ENCODE measurements at regions of chr6 and their contacts with region 1.

Region 1: GRCh38 chr6:25601800-25602673 is 50.0 kb upstream of the SCGN start:
- DNase-seq: no peak
- ATAC-seq: no peak
- H3K4me3 ChIP-seq: no peak overlapping the region
- H3K27ac ChIP-seq: no peak overlapping the region
- H3K4me1 ChIP-seq: no peaks in the 10 kb centered on the region
- H3K27me3 ChIP-seq: no peaks in the 10 kb centered on the region
- CTCF ChIP-seq: peak; percentile 34 to 58 (median 37)
- POLR2A ChIP-seq: no peak

Region 2: DNA sequence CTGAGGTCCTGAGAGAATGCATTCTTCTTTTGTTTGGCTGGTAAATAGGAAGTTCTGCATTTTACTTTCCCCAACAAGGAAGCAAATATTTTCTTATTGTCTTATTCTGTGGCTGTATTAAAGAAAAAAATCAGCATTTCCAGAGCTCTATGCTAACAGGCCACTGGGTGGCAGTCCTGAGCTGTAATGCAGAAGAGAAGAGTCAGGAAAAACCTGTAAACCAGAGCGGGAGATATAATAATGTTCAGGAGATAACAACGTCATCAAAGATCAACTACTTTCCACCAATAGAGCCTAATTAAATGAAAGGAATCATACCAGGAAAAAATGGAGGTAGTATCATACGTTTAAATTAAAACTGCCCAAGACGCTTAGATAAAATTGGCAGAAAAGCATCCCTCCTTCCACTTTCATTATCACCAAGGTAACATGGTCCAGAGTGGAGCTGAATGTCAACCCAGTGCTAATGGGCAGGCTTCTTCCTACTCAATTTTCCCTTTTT is 378.5 kb before region 1 on chr6:
- in situ Hi-C with region 1: loop called in 2 of 4 experiments (anchors 5 kb)
- intact Hi-C with region 1: loop called (anchors 10 kb)
- DNase-seq: peak in 1 of 2 donors; percentile 21
- ATAC-seq: peak in 1 of 2 donors; percentile 58
- H3K4me3 ChIP-seq: peak overlapping the region in 3 of 4 donors; percentile 6 to 34 (median 32)
- H3K27ac ChIP-seq: no peak overlapping the region
- H3K4me1 ChIP-seq: no peaks in the 10 kb centered on the region
- H3K27me3 ChIP-seq: no peaks in the 10 kb centered on the region
- CTCF ChIP-seq: peak; percentile 47 to 78 (median 56)
- POLR2A ChIP-seq: no peak

Region 3: DNA sequence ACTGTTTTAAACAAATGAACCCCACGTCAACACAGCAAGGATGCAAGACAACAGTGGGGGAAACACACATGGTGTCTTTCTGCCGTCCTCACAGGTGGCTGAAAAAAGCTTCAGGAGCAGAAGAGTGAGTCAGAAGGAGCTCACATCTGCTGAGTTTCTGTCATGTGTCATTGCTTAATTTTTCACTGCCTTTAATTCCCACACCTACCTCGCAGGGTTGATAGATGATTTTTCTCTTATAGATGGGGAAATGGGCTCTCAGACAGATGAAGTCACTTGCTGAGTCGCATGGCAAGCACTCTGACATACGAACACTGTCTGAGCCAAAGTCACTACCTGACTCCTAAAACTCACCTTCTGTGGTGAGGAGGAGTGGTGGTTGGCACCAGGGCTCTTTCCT is 351.2 kb before region 1 on chr6:
- in situ Hi-C with region 1: loop called in 1 of 4 experiments (anchors 25 kb)
- intact Hi-C with region 1: no loop called
- DNase-seq: no peak
- ATAC-seq: no peak
- H3K4me3 ChIP-seq: no peak overlapping the region
- H3K27ac ChIP-seq: no peak overlapping the region
- H3K4me1 ChIP-seq: no peaks in the 10 kb centered on the region
- H3K27me3 ChIP-seq: no peaks in the 10 kb centered on the region
- CTCF ChIP-seq: no peak
- POLR2A ChIP-seq: no peak

Region 4: GRCh38 chr6:25266456-25267100 is 335.5 kb before region 1 on chr6:
- in situ Hi-C with region 1: loop called in 3 of 4 experiments (anchors 5 to 25 kb)
- intact Hi-C with region 1: loop called (anchors 5 kb)
- DNase-seq: no peak
- ATAC-seq: no peak
- H3K4me3 ChIP-seq: no peak overlapping the region
- H3K27ac ChIP-seq: peak overlapping the region in 1 of 4 donors; percentile 16
- H3K4me1 ChIP-seq: no peaks in the 10 kb centered on the region
- H3K27me3 ChIP-seq: no peaks in the 10 kb centered on the region
- CTCF ChIP-seq: no peak
- POLR2A ChIP-seq: no peak

Region 5: DNA sequence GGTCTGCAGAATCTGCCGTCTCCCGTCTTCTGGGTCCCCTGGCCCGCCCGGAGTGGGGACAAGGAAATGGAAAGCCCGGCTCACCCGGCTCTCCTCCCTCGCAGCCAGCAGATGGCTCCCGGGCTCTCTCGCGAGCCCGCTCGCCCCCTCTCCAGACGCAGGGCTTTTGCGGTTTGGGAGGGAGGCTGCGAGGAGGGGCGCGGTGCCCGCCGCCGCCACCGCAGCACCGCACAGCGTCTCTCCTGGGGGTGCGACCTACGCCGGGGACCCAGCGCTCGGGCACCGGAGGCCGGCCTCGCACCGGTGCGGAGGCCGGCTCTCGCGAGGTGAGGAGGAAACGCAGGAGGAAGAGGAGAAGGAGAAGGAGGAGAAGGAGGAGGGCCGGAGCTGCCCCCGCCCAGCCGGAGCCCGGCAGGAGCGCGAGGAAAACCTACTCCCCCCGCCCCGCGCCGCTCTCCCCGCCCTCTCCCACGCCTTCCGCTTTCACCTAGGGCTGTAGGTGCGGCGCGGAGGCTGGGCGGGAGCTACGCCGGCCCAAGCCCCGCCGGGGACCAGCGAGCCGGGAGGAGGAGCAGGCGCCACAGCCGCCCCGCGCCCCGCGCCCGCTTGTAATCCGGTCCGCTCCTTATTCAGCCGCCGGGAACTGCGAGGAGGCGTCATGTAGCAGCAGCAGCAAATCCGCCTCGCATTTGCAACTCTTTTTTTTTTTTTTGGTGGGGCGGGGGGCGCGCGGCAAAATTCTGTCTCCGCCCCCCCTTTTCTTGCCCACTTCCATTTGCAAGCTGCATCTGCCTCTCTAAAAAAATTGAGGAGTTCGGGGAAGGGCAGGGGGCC is 322.9 kb before region 1 on chr6 and contains the start of gene CARMIL1:
- in situ Hi-C with region 1: loop called in 2 of 4 experiments (anchors 10 to 25 kb)
- intact Hi-C with region 1: no loop called
- DNase-seq: peak; percentile 36 to 44
- ATAC-seq: peak; percentile 67 to 84
- H3K4me3 ChIP-seq: peak within 1 kb of the TSS; percentile 63 to 89 (median 68)
- H3K27ac ChIP-seq: peak within 1 kb of the TSS in 3 of 4 donors; percentile 13 to 52 (median 16)
- H3K4me1 ChIP-seq: peaks cover 9 to 16% of the 10 kb centered on the region in 2 donors
- H3K27me3 ChIP-seq: peaks cover 3 to 37% (median 18%) of the 10 kb centered on the region in 3 donors
- CTCF ChIP-seq: peak; percentile 29 to 50 (median 38)
- POLR2A ChIP-seq: no peak
- total RNA-seq, gene CARMIL1: 0.87 to 2.1 (median 1.7) TPM

Measured in gastrocnemius medialis (tissue), 4 donors.